Activated naive CD4-positive, alpha-beta T cell treated with anti-CD3 and anti-CD28 coated beads for 36 hours (primary cell): ENCODE measurements at regions of chr2 and their contacts with region 1.

Region 1: GRCh38 chr2:175167792-175168563 is at the start of gene ATF2:
- DNase-seq: peak; percentile 99
- H3K4me3 Mint-ChIP-seq: peak within 1 kb of the TSS; percentile 99
- H3K27ac Mint-ChIP-seq: peak within 1 kb of the TSS; percentile 97
- H3K4me1 Mint-ChIP-seq: peaks cover 43% of the 10 kb centered on the region
- H3K27me3 Mint-ChIP-seq: no peaks in the 10 kb centered on the region
- total RNA-seq, gene ATF2: 48.0 to 53.3 TPM

Region 2: GRCh38 chr2:173571021-173571882 is 1596.7 kb before region 1 on chr2:
- CTCF ChIA-PET with region 1: no interaction called
- intact Hi-C with region 1: no loop called
- DNase-seq: peak; percentile 8
- H3K4me3 Mint-ChIP-seq: no peak overlapping the region
- H3K27ac Mint-ChIP-seq: no peak overlapping the region
- H3K4me1 Mint-ChIP-seq: peaks cover 4% of the 10 kb centered on the region
- H3K27me3 Mint-ChIP-seq: peaks cover 6% of the 10 kb centered on the region

Region 3: GRCh38 chr2:174248187-174248997 is 919.6 kb before region 1 on chr2 and contains the start of gene OLA1:
- CTCF ChIA-PET with region 1: no interaction called
- intact Hi-C with region 1: loop called (anchors 2 kb)
- DNase-seq: peak; percentile 97
- H3K4me3 Mint-ChIP-seq: peak within 1 kb of the TSS; percentile 84
- H3K27ac Mint-ChIP-seq: peak within 1 kb of the TSS; percentile 79
- H3K4me1 Mint-ChIP-seq: peaks cover 25% of the 10 kb centered on the region
- H3K27me3 Mint-ChIP-seq: no peaks in the 10 kb centered on the region
- total RNA-seq, gene OLA1: 140 to 142 TPM

Region 4: DNA sequence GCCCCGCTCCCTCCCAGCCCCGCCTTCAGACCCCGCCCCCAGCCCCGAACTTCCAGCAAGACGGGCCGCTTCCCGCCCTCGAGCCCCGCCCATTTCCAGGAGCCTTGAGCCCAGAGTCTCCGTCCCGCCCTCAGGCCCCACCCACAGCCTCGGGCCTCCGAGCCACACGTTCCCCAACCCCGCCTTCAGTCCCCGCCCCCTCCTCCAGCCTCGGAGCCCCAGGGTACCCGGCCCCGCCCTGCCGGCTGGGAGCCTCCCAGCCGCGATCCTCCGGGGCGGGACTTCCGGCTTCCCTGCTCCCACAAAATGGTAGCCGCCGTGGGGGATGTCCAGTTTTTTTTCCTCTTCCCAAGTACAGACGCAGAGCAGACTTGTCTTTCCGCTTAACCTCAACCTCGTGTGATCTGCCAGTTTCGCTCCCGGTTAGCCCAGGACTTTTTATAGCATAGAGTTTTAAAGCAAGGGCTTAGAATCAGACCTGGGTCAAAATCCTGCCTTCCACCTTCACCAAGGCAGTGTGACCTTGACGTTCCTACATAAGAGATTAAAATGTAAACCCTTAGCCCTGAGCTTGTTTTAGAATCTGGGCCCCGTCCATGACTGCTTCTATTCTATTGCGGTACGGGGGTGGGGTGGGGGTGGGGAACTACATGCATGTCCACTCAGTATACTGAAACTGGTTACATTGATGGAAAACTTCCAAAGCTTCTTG is 680.7 kb before region 1 on chr2:
- CTCF ChIA-PET with region 1: no interaction called
- intact Hi-C with region 1: loop called (anchors 1 kb)
- DNase-seq: peak; percentile 100
- H3K4me3 Mint-ChIP-seq: peak overlapping the region; percentile 97
- H3K27ac Mint-ChIP-seq: peak overlapping the region; percentile 95
- H3K4me1 Mint-ChIP-seq: peaks cover 51% of the 10 kb centered on the region
- H3K27me3 Mint-ChIP-seq: no peaks in the 10 kb centered on the region

Region 5: GRCh38 chr2:174634130-174635014 is 533.6 kb before region 1 on chr2:
- CTCF ChIA-PET with region 1: no interaction called
- intact Hi-C with region 1: loop called (anchors 1 kb)
- DNase-seq: peak; percentile 79
- H3K4me3 Mint-ChIP-seq: peak overlapping the region; percentile 91
- H3K27ac Mint-ChIP-seq: peak overlapping the region; percentile 99
- H3K4me1 Mint-ChIP-seq: peaks cover 60% of the 10 kb centered on the region
- H3K27me3 Mint-ChIP-seq: no peaks in the 10 kb centered on the region

Region 6: GRCh38 chr2:174835797-174836255 is 332.2 kb before region 1 on chr2:
- CTCF ChIA-PET with region 1: no interaction called
- intact Hi-C with region 1: loop called (anchors 5 kb)
- DNase-seq: peak; percentile 38
- H3K4me3 Mint-ChIP-seq: peak overlapping the region; percentile 36
- H3K27ac Mint-ChIP-seq: peak overlapping the region; percentile 71
- H3K4me1 Mint-ChIP-seq: peaks cover 32% of the 10 kb centered on the region
- H3K27me3 Mint-ChIP-seq: no peaks in the 10 kb centered on the region

Region 7: DNA sequence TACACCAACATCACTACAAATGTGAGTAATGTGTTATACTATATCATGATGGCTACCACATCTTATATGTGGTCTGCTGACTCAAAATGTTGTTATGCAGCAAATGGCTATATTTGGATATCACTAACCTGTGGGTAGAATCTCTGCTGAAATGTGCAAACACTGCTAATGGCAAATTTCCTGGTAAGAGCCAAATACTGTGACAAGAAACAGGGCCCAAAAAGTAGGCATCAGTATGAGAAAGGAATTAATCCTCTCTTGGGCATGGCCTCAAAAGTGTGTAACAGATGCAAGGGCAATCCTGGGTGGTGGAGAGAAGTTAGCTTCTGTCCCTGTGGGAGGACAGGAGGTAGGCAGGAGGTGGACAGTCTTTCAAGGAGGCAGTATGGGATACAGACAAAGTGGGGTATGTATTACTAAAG is 13.3 kb before region 1 on chr2:
- CTCF ChIA-PET with region 1: no interaction called
- intact Hi-C with region 1: loop called (anchors 1 kb)
- DNase-seq: peak; percentile 8
- H3K4me3 Mint-ChIP-seq: no peak overlapping the region
- H3K27ac Mint-ChIP-seq: no peak overlapping the region
- H3K4me1 Mint-ChIP-seq: peaks cover 40% of the 10 kb centered on the region
- H3K27me3 Mint-ChIP-seq: no peaks in the 10 kb centered on the region

Region 8: DNA sequence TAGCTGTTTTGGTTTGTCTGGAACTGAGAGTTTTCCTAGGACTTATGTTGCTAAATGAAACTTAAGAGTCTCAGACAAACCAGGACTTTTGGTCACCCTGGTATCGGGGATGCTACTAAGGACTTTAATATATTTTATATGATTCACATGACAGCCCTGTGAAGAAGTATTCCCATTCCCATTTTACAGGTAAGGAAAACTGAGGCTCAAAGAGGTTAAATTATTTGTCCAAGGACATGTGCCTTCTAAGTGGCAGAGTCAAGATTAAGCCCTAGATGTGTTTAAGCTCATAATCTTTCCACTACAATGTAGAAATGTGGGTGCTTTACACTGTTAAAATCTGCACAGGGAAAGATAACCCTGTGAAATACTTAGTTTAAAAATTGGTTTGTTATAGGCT is 91.2 kb after region 1 on chr2:
- CTCF ChIA-PET with region 1: no interaction called
- intact Hi-C with region 1: no loop called
- DNase-seq: no peak
- H3K4me3 Mint-ChIP-seq: no peak overlapping the region
- H3K27ac Mint-ChIP-seq: no peak overlapping the region
- H3K4me1 Mint-ChIP-seq: no peaks in the 10 kb centered on the region
- H3K27me3 Mint-ChIP-seq: peaks cover 11% of the 10 kb centered on the region

Region 9: GRCh38 chr2:176001916-176002687 is 834.1 kb after region 1 on chr2 and contains the start of gene LNPK:
- CTCF ChIA-PET with region 1: no interaction called
- intact Hi-C with region 1: loop called (anchors 2 kb)
- DNase-seq: peak; percentile 93
- H3K4me3 Mint-ChIP-seq: peak within 1 kb of the TSS; percentile 88
- H3K27ac Mint-ChIP-seq: peak within 1 kb of the TSS; percentile 68
- H3K4me1 Mint-ChIP-seq: peaks cover 17% of the 10 kb centered on the region
- H3K27me3 Mint-ChIP-seq: no peaks in the 10 kb centered on the region
- total RNA-seq, gene LNPK: 22.2 to 23.9 TPM